Right cardiac atrium (tissue), 5 donors: ENCODE measurements at regions of chr1 and their contacts with region 1.

Region 1: GRCh38 chr1:19485362-19486187 is at the start of gene CAPZB:
- DNase-seq: peak; percentile 97 to 99 (median 99)
- ATAC-seq: peak; percentile 93
- H3K4me3 ChIP-seq: peak within 1 kb of the TSS; percentile 93
- H3K27ac ChIP-seq: peak within 1 kb of the TSS; percentile 98
- H3K4me1 ChIP-seq: peaks cover 24% of the 10 kb centered on the region
- H3K27me3 ChIP-seq: no peaks in the 10 kb centered on the region
- total RNA-seq, gene CAPZB: 226 to 255 (median 232) TPM

Region 2: GRCh38 chr1:19390901-19391595 is 94.5 kb before region 1 on chr1:
- intact Hi-C with region 1: loop called in 3 of 4 experiments (anchors 2 to 10 kb)
- DNase-seq: peak; percentile 42 to 82 (median 75)
- ATAC-seq: peak in 1 of 2 donors; percentile 28
- H3K4me3 ChIP-seq: peak overlapping the region; percentile 7
- H3K27ac ChIP-seq: peak overlapping the region; percentile 70
- H3K4me1 ChIP-seq: peaks cover 12% of the 10 kb centered on the region
- H3K27me3 ChIP-seq: no peaks in the 10 kb centered on the region

Region 3: DNA sequence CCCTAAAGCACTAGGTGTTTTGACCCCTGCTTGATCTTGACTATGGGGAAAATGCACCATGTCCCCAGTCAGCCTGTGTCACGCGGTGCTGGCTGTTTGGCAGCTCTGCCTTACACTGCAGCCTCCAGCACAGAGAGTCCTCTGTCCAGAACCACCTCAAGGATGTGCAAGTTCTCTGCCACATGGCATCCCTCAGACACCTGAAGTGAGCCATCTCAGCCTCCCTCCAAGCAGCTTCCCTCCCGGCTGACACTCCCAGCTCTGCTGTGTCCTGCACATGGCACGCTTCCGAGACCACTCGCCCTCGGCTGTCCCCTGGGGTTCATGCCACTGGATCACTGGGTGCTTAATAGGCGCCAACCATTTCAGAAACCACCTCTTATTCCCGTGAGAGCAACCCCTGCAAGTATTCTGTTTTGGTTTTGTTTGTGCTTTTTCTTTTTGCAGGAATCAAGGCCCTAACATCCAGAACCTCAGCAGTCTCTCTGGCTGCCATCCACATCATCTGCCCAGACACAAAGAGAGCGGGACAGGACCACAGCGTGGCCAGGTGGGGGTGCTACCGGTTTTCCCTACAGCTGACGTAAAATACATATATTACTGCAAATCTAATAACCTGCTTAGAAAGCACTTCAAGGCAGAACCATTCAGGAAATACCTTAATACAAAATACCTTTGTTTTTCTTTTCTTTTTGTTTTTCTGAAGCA is 46.0 kb before region 1 on chr1:
- intact Hi-C with region 1: loop called in 1 of 4 experiments (anchors 10 kb)
- DNase-seq: peak in 2 of 3 donors; percentile 71 to 83
- ATAC-seq: peak; percentile 13 to 46
- H3K4me3 ChIP-seq: no peak overlapping the region
- H3K27ac ChIP-seq: peak overlapping the region; percentile 57
- H3K4me1 ChIP-seq: peaks cover 47% of the 10 kb centered on the region
- H3K27me3 ChIP-seq: no peaks in the 10 kb centered on the region

Region 4: DNA sequence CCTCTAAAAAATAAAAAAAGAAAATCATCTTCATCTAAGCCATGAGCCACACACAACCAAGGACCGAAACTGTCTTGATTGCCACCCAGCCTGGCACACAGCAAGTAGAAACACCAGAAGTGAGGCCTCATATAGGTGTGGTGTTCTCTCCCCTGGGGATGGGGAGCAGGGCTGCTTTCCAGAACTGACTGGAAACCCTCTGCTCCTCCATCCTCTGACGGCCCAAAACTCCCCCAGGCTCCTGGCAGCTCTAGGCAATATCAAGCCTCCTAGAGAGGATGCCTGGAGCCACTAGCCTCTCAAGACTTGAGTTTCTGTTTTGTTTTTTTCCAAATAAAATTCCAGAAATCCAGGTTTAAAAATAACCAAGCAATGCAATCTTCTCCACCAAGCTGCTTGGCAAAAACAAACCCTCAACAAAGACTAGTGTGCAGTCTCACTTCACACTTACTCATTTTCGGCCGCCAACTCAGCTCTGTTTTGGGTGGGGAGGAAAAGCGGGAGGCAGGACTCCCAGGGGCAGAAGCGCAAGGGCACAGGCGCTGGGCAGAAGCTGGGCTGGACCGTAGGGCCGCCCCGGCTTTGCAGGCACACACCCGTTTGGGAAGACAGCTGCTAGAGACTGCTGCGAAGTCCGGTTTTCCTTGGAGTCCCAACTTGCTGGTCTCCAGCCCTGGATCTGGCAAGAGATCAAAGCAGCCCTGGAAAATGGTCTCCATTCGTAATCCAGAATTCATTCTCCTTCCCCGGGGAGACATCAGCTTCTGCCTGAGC is 77.9 kb after region 1 on chr1:
- intact Hi-C with region 1: no loop called
- DNase-seq: peak; percentile 68 to 87 (median 87)
- ATAC-seq: peak; percentile 87 to 92
- H3K4me3 ChIP-seq: no peak overlapping the region
- H3K27ac ChIP-seq: peak overlapping the region; percentile 53
- H3K4me1 ChIP-seq: peaks cover 5% of the 10 kb centered on the region
- H3K27me3 ChIP-seq: no peaks in the 10 kb centered on the region

Region 5: DNA sequence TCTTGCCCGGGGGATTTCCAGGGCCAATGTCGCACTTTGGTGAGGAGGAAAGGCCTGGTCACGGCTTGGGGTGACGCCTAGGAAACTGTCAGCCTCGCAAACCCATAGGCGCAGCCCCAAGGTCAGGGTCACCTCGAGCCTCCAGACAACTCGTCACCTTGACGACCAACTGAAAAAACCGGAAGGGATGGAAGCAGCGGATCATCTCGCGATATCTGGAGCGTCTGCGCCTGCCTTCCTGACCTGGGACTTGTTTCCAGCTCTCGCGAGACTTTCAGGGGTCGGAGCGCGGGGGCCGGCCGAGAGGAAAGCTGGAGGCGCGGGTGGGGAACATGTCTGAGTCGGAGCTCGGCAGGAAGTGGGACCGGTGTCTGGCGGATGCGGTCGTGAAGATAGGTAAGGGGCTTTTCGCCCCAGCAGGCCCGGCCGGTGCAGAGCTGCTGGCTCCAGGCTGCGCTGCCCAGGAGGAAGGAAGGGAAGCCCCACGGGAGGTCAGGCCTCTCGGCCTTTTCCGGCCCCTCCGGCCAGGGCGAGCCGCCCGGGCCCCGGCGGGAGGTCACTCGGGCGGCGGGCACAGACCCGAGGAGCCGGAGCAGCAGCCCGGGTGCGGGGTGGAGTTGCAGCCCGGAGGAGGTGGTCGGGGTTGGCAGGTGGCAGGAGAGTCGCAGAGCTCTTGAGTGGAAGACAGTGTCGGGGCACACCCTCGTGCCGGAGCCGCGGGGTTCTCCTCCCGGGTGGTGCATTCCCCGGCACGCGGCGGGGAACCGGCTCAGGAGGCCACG is 111.3 kb after region 1 on chr1:
- intact Hi-C with region 1: loop called in 3 of 4 experiments (anchors 5 to 10 kb)
- DNase-seq: peak; percentile 98
- ATAC-seq: peak; percentile 92 to 96
- H3K4me3 ChIP-seq: peak overlapping the region; percentile 98
- H3K27ac ChIP-seq: peak overlapping the region; percentile 99
- H3K4me1 ChIP-seq: no peaks in the 10 kb centered on the region
- H3K27me3 ChIP-seq: no peaks in the 10 kb centered on the region

Region 6: DNA sequence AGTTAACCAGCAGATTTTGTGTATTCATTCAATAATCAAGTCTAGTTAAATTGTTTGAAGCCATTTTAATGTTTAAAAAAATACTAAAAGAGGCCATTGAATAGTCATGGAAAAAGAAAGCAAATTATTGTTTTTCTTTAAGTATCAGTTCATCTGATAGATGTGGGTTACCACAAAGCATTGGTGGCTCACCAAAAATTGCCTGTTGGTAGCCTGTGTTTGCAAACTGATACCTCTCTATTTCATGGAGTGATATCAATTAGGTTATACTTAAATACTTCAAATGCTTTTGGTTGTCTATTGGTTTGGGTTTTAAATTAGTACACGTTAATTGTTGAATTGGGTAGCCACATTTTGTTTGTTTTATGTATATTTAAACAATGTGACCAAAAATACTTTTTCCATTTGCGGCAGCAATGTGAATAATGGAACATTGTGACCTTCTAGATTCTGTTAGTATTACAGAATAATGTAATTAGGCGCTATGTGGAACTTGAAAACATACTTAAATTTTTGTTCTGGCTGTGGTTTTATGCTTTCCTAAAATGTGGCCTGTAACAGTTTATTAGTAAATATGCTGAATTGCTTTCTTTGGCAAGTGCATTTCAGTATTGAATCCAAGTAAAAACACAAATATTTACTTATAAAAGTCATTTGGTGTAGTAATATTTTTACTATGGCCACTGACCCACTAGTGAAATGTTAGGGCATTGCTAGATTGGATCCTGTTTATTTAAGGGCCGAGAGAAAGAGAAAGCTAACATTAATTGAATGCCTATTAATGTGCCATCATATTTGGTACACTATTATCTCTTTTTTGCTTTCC is 121.5 kb after region 1 on chr1:
- intact Hi-C with region 1: loop called in 1 of 4 experiments (anchors 10 kb)
- DNase-seq: no peak
- ATAC-seq: no peak
- H3K4me3 ChIP-seq: no peak overlapping the region
- H3K27ac ChIP-seq: no peak overlapping the region
- H3K4me1 ChIP-seq: peaks cover 1% of the 10 kb centered on the region
- H3K27me3 ChIP-seq: no peaks in the 10 kb centered on the region

Region 7: DNA sequence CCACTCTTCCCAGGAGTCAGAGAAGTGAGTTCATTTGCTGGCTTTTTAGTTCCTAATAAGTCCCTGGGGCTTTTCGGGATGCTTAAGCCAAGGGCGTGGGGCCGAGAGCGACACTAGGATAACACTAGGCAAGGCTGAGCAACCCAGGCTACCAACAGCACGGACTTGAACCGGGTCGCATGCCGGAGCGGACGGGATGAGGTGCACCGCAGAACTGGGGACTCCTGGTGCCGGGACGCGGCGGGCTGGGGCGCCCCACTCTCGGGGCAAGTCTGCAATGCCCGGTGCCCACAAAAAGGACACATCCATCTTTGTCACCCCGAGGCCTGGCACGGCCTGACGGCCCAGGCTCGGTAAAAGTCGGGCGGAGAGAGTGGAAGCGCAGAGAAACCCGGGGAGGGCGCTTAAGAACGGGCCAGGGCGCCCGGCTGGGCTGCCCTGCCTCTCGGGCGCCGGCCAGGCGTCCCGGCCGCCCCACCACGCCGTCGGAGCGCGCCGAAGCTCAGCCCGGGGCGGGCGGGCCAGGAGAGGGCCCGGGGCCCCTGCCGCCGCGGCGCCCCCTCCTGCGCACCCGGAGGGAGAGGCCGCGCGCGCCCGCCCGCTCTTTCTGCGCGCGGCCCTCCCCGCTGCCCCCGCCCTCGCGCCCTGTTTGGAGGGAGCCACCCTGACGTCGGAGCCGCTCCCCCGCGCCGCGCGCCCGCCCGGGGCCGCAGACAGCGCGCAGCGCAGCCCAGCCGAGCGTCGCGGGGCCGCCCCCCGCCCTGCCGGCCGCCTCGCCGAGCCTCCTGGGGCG is 158.2 kb after region 1 on chr1 and contains the start of gene NBL1:
- intact Hi-C with region 1: loop called in 2 of 4 experiments (anchors 5 to 10 kb)
- DNase-seq: peak; percentile 80 to 93 (median 92)
- ATAC-seq: peak; percentile 76 to 86
- H3K4me3 ChIP-seq: peak within 1 kb of the TSS; percentile 87
- H3K27ac ChIP-seq: peak within 1 kb of the TSS; percentile 71
- H3K4me1 ChIP-seq: peaks cover 2% of the 10 kb centered on the region
- H3K27me3 ChIP-seq: no peaks in the 10 kb centered on the region
- total RNA-seq, gene NBL1: 40.7 to 64.8 (median 46.1) TPM